Activated CD8-positive, alpha-beta memory T cell treated with anti-CD3 and anti-CD28 coated beads, Interleukin-2, amount 10 ng/mL, durations not matched to agents 7 days and 5 days (primary cell): ENCODE measurements at regions of chr5 and their contacts with region 1.

Region 1: GRCh38 chr5:65102828-65103711 is 334.3 kb downstream of the CWC27 start:
- DNase-seq: peak; percentile 59
- ATAC-seq: peak; percentile 83
- H3K4me3 Mint-ChIP-seq: peak overlapping the region; percentile 66
- H3K27ac Mint-ChIP-seq: peak overlapping the region; percentile 33
- H3K4me1 Mint-ChIP-seq: peaks cover 34% of the 10 kb centered on the region
- H3K27me3 Mint-ChIP-seq: peaks cover 19% of the 10 kb centered on the region

Region 2: GRCh38 chr5:65035211-65036206 is 67.6 kb before region 1 on chr5:
- CTCF ChIA-PET with region 1: interaction called, 14 read pairs
- DNase-seq: peak; percentile 93
- ATAC-seq: peak; percentile 92
- H3K4me3 Mint-ChIP-seq: peak overlapping the region; percentile 71
- H3K27ac Mint-ChIP-seq: peak overlapping the region; percentile 93
- H3K4me1 Mint-ChIP-seq: peaks cover 39% of the 10 kb centered on the region
- H3K27me3 Mint-ChIP-seq: no peaks in the 10 kb centered on the region